ENCODE measurements at regions of chr7 and their contacts with region 1.

Region 1: GRCh38 chr7:117119192-117119924 is 166.1 kb downstream of the ST7 start:
- DNase-seq: peak; percentile 90 to 92
- ATAC-seq: peak; percentile 58
- H3K4me3 ChIP-seq: no peak overlapping the region
- H3K27ac ChIP-seq: no peak overlapping the region
- H3K4me1 ChIP-seq: no peaks in the 10 kb centered on the region
- H3K27me3 ChIP-seq: no peaks in the 10 kb centered on the region

Region 2: DNA sequence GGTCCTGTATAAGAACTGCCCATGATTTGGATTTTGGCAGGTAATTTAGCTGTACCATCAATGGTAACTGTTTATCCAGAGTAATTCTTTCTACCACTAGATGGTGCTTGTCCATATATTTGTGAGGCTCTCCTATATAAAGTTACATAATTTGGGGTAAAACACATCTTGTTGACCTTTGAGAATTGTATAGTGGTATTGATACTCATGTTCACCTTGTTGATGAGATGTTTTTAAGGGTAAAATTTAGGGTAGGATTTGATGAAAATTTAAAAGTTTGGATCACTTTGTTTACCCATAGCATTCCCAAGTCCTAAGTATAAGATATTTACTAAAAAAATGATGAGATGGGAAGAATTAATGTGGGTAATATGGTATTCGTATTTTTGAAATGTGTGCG is 134.4 kb before region 1 on chr7:
- intact Hi-C with region 1: loop called (anchors 1 to 2 kb)
- DNase-seq: no peak
- ATAC-seq: no peak
- H3K4me3 ChIP-seq: no peak overlapping the region
- H3K27ac ChIP-seq: no peak overlapping the region
- H3K4me1 ChIP-seq: no peaks in the 10 kb centered on the region
- H3K27me3 ChIP-seq: no peaks in the 10 kb centered on the region

Region 3: DNA sequence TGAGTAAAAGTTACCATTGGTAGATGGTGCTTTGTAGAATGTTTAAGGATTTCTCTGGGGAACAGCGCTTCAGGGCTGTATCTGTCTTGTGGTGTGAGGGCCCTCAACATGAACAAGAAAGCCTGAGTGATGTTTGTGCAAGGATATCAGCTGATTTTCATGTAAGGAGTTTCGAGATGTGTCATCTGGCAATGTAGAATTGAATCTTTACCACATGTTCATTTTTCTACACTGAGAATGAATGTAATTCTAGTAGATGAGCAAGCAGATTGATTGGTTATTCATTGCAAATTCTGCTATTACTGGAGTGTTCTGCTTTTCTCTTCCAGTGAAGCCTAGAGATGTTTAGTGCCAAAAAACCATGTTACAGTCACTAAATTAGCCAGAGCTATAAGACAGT is 78.4 kb before region 1 on chr7:
- intact Hi-C with region 1: no loop called
- DNase-seq: no peak
- ATAC-seq: no peak
- H3K4me3 ChIP-seq: no peak overlapping the region
- H3K27ac ChIP-seq: peak overlapping the region in 1 of 2 donors; percentile 57
- H3K4me1 ChIP-seq: peaks cover 5 to 7% of the 10 kb centered on the region in 2 donors
- H3K27me3 ChIP-seq: no peaks in the 10 kb centered on the region

Region 4: GRCh38 chr7:117085769-117086463 is 33.4 kb before region 1 on chr7:
- intact Hi-C with region 1: no loop called
- DNase-seq: no peak
- ATAC-seq: no peak
- H3K4me3 ChIP-seq: no peak overlapping the region
- H3K27ac ChIP-seq: no peak overlapping the region
- H3K4me1 ChIP-seq: peaks cover 5 to 8% of the 10 kb centered on the region in 2 donors
- H3K27me3 ChIP-seq: no peaks in the 10 kb centered on the region

Measured in aorta (tissue), 5 donors.